Panc1 (cell line): ENCODE measurements at regions of chr16 and their contacts with region 1.

Region 1: GRCh38 chr16:53881371-53881770 is 177.4 kb downstream of the FTO start:
- DNase-seq: peak; percentile 51
- ATAC-seq: no peak
- H3K4me3 ChIP-seq: no peak overlapping the region
- H3K27ac ChIP-seq: no peak overlapping the region
- H3K4me1 ChIP-seq: no peaks in the 10 kb centered on the region
- H3K27me3 ChIP-seq: no peaks in the 10 kb centered on the region
- CTCF ChIP-seq: no peak

Region 2: DNA sequence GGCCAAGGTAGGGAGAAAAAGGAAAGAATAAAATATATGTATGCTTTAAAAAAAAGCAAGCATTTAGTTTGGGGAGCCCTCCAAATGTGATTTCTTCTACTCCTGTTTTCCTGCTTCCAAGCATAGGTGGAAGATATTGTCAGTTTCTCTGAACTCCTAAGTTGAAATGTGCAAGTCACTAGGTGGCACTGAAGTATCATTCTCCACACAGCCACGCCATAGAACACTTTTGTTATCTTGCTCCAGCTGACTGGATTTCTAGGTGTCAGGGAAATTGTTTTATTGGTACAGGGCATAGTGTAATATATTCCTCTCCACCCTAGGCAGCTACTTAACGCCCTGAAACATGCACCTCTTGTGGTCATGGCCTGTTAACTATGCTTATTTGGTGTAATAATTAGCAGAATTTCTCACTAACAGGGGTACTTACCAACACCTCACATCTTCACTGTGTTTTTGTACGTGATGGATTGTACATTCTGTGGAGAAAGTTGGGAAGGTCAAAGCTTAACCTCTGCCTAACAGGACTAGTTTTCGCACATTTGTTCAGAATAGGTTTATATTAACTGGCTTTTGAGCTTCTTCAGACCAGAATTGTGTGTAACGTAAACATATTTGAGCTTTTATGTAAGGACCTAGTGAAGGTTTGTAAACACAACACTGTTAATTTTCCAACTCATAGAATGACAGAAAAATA is 108.1 kb before region 1 on chr16:
- CTCF ChIA-PET with region 1: interaction called, 10 read pairs
- POLR2A ChIA-PET with region 1: no interaction called
- in situ Hi-C with region 1: no loop called
- intact Hi-C with region 1: loop called (anchors 5 kb)
- DNase-seq: no peak
- ATAC-seq: peak; percentile 56
- H3K4me3 ChIP-seq: no peak overlapping the region
- H3K27ac ChIP-seq: peak overlapping the region; percentile 89
- H3K4me1 ChIP-seq: peaks cover 67% of the 10 kb centered on the region
- H3K27me3 ChIP-seq: no peaks in the 10 kb centered on the region
- CTCF ChIP-seq: peak; percentile 74

Region 3: DNA sequence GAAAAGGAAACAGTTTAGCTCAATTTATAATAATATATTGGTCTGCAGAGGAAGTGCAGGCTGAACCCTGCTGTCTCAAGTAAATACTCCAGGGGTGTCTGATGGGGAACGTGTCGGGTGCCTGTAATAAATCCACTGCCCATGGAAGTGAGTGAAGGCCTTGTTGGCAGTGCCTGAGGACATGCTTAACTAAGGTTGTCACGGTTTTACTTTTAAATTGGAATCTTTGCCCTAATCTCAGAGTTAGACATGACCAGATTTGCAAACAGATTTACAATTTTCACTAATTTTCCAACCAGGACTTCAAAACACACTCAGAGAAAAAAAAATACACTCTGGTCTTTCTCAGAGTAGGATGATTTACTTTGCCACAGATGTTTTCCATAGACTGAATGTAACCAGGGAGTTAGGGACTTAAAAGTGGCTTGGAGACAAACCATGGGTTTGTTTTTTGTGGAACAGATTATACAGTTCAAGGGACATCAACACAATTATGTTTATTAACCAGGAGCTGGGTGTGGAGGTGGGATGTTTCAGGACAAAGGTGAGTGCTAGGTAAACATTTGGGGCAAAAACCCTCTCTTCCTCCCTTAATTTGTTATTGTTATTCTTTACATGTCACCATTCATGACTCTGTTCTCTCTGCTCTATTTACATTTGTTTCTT is 33.0 kb before region 1 on chr16:
- CTCF ChIA-PET with region 1: no interaction called
- POLR2A ChIA-PET with region 1: no interaction called
- in situ Hi-C with region 1: no loop called
- intact Hi-C with region 1: no loop called
- DNase-seq: no peak
- ATAC-seq: no peak
- H3K4me3 ChIP-seq: no peak overlapping the region
- H3K27ac ChIP-seq: no peak overlapping the region
- H3K4me1 ChIP-seq: no peaks in the 10 kb centered on the region
- H3K27me3 ChIP-seq: no peaks in the 10 kb centered on the region
- CTCF ChIP-seq: no peak

Region 4: DNA sequence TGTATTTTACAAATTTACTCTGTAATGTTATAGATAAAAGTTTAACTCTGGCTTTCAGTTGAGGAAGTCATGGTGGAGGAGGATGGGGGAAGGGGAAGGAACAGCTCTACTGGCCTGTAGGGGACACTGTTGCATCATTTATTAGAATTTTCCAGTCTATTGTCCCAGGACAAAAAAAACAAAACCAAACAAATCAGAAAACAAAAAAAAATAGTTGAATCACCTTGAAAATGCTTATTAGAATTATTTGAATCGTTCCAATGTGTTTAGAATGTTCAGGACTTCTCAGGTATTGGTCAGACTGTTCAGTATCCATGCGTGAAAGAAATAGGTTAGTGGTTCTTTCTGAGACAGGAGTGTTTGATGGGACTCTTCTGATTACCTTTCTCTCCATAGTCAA is 64.6 kb after region 1 on chr16:
- CTCF ChIA-PET with region 1: no interaction called
- POLR2A ChIA-PET with region 1: no interaction called
- in situ Hi-C with region 1: no loop called
- intact Hi-C with region 1: no loop called
- DNase-seq: peak; percentile 5
- ATAC-seq: no peak
- H3K4me3 ChIP-seq: no peak overlapping the region
- H3K27ac ChIP-seq: no peak overlapping the region
- H3K4me1 ChIP-seq: no peaks in the 10 kb centered on the region
- H3K27me3 ChIP-seq: no peaks in the 10 kb centered on the region
- CTCF ChIP-seq: peak; percentile 65; the same call in 1 of the 2 replicates

Region 5: GRCh38 chr16:54425681-54426552 is 544.5 kb after region 1 on chr16:
- CTCF ChIA-PET with region 1: no interaction called
- POLR2A ChIA-PET with region 1: interaction called, 14 read pairs
- in situ Hi-C with region 1: no loop called
- intact Hi-C with region 1: no loop called
- DNase-seq: no peak
- ATAC-seq: no peak
- H3K4me3 ChIP-seq: no peak overlapping the region
- H3K27ac ChIP-seq: no peak overlapping the region
- H3K4me1 ChIP-seq: no peaks in the 10 kb centered on the region
- H3K27me3 ChIP-seq: no peaks in the 10 kb centered on the region; the same call in 1 of the 2 replicates
- CTCF ChIP-seq: no peak